ENCODE measurements at regions of chr10 and their contacts with region 1.

Region 1: GRCh38 chr10:97210543-97210961 is 24.8 kb upstream of the SLIT1 start:
- DNase-seq: no peak
- H3K4me3 ChIP-seq: no peak overlapping the region
- H3K27ac ChIP-seq: no peak overlapping the region
- H3K4me1 ChIP-seq: no peaks in the 10 kb centered on the region
- H3K27me3 ChIP-seq: peaks cover 0 to 16% (median 0%) of the 10 kb centered on the region in 4 donors
- CTCF ChIP-seq: peak; percentile 91 to 96 (median 94)
- EP300 ChIP-seq: no peak
- POLR2A ChIP-seq: no peak

Region 2: DNA sequence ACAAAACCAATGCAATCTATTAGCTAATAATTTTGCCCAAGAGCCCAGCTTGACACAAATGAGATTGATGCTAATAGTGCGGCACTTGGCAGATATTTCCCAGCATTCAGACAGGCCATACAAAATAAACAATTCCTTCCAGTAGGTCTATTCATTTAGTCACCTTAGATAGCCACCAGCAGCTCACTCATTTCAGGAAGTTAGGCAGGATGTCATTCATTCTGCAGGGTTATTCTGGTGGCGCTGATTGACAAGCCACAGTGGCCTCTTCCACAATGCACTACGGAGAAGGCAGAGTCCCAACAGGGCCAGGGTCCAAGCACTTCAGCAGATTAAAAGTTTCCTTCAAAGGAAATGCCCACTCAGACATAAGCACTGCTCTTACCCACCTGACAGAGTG is 546.0 kb before region 1 on chr10:
- intact Hi-C with region 1: no loop called
- DNase-seq: no peak
- H3K4me3 ChIP-seq: no peak overlapping the region
- H3K27ac ChIP-seq: no peak overlapping the region
- H3K4me1 ChIP-seq: peaks cover 0 to 5% (median 0%) of the 10 kb centered on the region in 4 donors
- H3K27me3 ChIP-seq: no peaks in the 10 kb centered on the region
- CTCF ChIP-seq: no peak
- EP300 ChIP-seq: no peak
- POLR2A ChIP-seq: no peak

Region 3: GRCh38 chr10:97072851-97073665 is 137.5 kb before region 1 on chr10:
- intact Hi-C with region 1: loop called (anchors 2 kb)
- DNase-seq: peak; percentile 96
- H3K4me3 ChIP-seq: no peak overlapping the region
- H3K27ac ChIP-seq: no peak overlapping the region
- H3K4me1 ChIP-seq: peaks cover 0 to 5% (median 1%) of the 10 kb centered on the region in 4 donors
- H3K27me3 ChIP-seq: peaks cover 0 to 48% (median 3%) of the 10 kb centered on the region in 4 donors
- CTCF ChIP-seq: peak; percentile 84 to 94 (median 86)
- EP300 ChIP-seq: no peak
- POLR2A ChIP-seq: no peak

Measured in esophagus muscularis mucosa (tissue), 4 donors.